ENCODE measurements at regions of chr1 and their contacts with region 1.

Region 1: GRCh38 chr1:181206513-181206912 is 118.0 kb downstream of the IER5 start:
- DNase-seq: no peak
- H3K4me3 ChIP-seq: no peak overlapping the region
- CTCF ChIP-seq: no peak

Region 2: DNA sequence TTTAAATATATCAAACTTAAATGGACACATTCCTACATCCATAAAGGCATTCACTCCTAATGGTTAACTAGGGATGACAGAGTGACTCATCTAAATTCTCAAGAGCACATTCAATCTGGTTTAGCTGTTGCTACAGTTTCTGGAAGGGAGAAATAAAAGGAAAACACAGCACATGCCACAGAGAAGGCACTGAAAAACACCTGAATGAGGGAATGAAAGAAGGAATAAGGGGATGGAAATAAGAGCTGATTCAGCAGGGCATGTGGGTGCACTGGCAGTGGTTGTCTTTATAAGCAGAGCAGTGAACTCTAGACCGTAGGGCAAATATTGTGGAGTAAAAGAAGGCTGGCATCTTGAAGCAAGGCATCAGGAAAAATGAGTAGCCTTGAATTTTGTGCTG is 897.2 kb before region 1 on chr1:
- in situ Hi-C with region 1: no loop called
- DNase-seq: no peak
- H3K4me3 ChIP-seq: no peak overlapping the region
- CTCF ChIP-seq: no peak

Region 3: GRCh38 chr1:181239086-181239485 is 32.6 kb after region 1 on chr1:
- in situ Hi-C with region 1: loop called (anchors 5 kb)
- DNase-seq: no peak
- H3K4me3 ChIP-seq: no peak overlapping the region
- CTCF ChIP-seq: no peak

Region 4: DNA sequence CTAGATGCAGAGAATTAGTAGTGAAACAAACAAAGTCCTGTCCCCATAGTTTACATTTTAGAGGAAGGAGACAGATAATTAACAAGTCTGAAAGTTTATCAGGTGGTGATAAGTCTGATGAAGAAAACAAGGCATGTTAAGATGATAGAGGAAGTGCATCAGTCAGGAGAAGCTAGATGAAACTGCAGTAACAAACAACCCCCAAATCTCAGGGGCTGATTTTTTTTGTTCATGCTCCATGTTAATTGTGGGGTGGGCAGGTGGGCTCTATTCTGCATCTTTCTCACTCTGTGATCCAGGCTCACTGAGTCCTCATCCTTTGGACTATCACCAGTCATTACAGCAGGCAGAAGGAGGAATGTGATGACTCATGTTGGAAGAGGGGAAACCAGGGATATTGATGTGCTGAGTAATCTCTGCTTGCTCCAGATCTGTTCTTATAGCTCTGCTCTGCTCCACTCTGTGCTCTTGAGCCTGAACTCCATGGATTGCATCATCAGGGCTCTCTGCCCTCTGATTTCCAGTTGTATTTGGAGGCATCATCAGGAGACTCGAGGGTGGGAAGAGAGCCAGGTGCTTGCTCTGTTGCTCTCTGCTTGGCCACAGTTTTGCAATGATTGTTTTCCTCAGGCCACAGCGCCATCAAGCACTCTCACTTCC is 48.9 kb after region 1 on chr1:
- in situ Hi-C with region 1: no loop called
- DNase-seq: peak; percentile 89
- H3K4me3 ChIP-seq: no peak overlapping the region
- CTCF ChIP-seq: no peak

Region 5: DNA sequence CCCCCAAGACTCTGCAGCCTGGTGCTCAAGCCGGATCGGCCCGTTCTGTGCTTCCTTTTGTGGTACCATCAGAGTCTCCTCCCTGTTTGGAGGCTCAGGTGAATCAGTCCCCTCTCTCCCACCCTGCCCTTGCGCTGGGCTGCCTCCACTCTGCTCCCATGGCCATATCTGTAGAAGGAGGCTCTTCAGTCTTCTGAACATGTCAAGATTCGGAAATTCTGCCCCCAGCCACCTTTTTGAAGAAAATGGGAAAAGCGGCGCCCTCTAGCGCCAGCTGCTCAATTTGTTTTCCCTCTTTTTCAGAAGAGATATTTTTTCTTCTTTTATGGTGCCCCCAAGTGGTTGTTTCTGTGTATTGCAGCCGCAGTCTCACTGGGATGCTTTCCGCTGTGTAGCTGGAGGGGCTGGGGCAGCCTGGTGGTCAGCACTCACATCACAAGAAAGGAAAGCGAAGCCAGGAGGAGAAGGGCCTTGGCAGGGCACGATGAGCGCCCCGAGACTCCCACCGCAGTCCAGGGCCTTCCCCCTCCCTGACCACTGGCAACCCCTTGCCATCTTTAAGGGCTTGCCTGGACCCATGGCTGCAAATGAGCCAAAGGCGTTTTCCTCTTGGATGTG is 218.4 kb after region 1 on chr1:
- in situ Hi-C with region 1: loop called (anchors 25 kb)
- DNase-seq: peak; percentile 44
- H3K4me3 ChIP-seq: no peak overlapping the region
- CTCF ChIP-seq: peak; percentile 99

Measured in astrocyte of the cerebellum (primary cell).